ENCODE measurements at regions of chr19 and their contacts with region 1.

Region 1: GRCh38 chr19:11047866-11048265 is 41.4 kb upstream of the LDLR start:
- DNase-seq: no peak
- ATAC-seq: no peak
- H3K4me3 ChIP-seq: no peak overlapping the region
- H3K4me3 Mint-ChIP-seq: peak overlapping the region in 1 of 10 donors; percentile 34
- H3K27ac ChIP-seq: peak overlapping the region; percentile 68
- H3K27ac Mint-ChIP-seq: peak overlapping the region; percentile 55 to 98 (median 93)
- H3K4me1 ChIP-seq: peaks cover 33 to 44% of the 10 kb centered on the region in 2 donors
- H3K4me1 Mint-ChIP-seq: peaks cover 21 to 57% (median 51%) of the 10 kb centered on the region in 7 donors
- H3K27me3 ChIP-seq: no peaks in the 10 kb centered on the region
- H3K27me3 Mint-ChIP-seq: no peaks in the 10 kb centered on the region

Region 2: GRCh38 chr19:10653715-10654492 is 394.0 kb before region 1 on chr19 and contains the start of gene ILF3:
- CTCF ChIA-PET with region 1: no interaction called
- POLR2A ChIA-PET with region 1: no interaction called
- intact Hi-C with region 1: no loop called
- DNase-seq: peak; percentile 97 to 100 (median 100)
- ATAC-seq: peak; percentile 89
- H3K4me3 ChIP-seq: peak within 1 kb of the TSS; percentile 87
- H3K4me3 Mint-ChIP-seq: peak within 1 kb of the TSS; percentile 93 to 98 (median 95)
- H3K27ac ChIP-seq: peak within 1 kb of the TSS; percentile 100
- H3K27ac Mint-ChIP-seq: peak within 1 kb of the TSS; percentile 94 to 99 (median 98)
- H3K4me1 ChIP-seq: peaks cover 32 to 38% of the 10 kb centered on the region in 2 donors
- H3K4me1 Mint-ChIP-seq: peaks cover 17 to 61% (median 42%) of the 10 kb centered on the region in 7 donors
- H3K27me3 ChIP-seq: no peaks in the 10 kb centered on the region
- H3K27me3 Mint-ChIP-seq: peaks cover 0 to 3% (median 0%) of the 10 kb centered on the region in 5 donors
- total RNA-seq, gene ILF3: 346 to 515 (median 368) TPM

Region 3: GRCh38 chr19:10769533-10770491 is 278.1 kb before region 1 on chr19:
- CTCF ChIA-PET with region 1: no interaction called
- POLR2A ChIA-PET with region 1: no interaction called
- intact Hi-C with region 1: no loop called
- DNase-seq: peak in 6 of 9 donors; percentile 21 to 49 (median 38)
- ATAC-seq: no peak
- H3K4me3 ChIP-seq: no peak overlapping the region
- H3K4me3 Mint-ChIP-seq: no peak overlapping the region
- H3K27ac ChIP-seq: peak overlapping the region; percentile 29
- H3K27ac Mint-ChIP-seq: peak overlapping the region in 8 of 9 donors; percentile 20 to 79 (median 68)
- H3K4me1 ChIP-seq: peaks cover 0 to 4% of the 10 kb centered on the region in 2 donors
- H3K4me1 Mint-ChIP-seq: peaks cover 14 to 42% (median 32%) of the 10 kb centered on the region in 7 donors
- H3K27me3 ChIP-seq: no peaks in the 10 kb centered on the region
- H3K27me3 Mint-ChIP-seq: no peaks in the 10 kb centered on the region

Region 4: GRCh38 chr19:11090054-11090900 is 42.4 kb after region 1 on chr19:
- CTCF ChIA-PET with region 1: no interaction called
- POLR2A ChIA-PET with region 1: interaction called, 5 read pairs
- intact Hi-C with region 1: loop called (anchors 2 kb)
- DNase-seq: peak; percentile 89 to 97 (median 96)
- ATAC-seq: peak; percentile 90
- H3K4me3 ChIP-seq: peak overlapping the region; percentile 83
- H3K4me3 Mint-ChIP-seq: peak overlapping the region; percentile 85 to 94 (median 89)
- H3K27ac ChIP-seq: peak overlapping the region; percentile 91
- H3K27ac Mint-ChIP-seq: peak overlapping the region; percentile 88 to 99 (median 96)
- H3K4me1 ChIP-seq: peaks cover 24 to 41% of the 10 kb centered on the region in 2 donors
- H3K4me1 Mint-ChIP-seq: peaks cover 13 to 51% (median 44%) of the 10 kb centered on the region in 7 donors
- H3K27me3 ChIP-seq: no peaks in the 10 kb centered on the region
- H3K27me3 Mint-ChIP-seq: peaks cover 0 to 2% (median 0%) of the 10 kb centered on the region in 5 donors

Measured in naive thymus-derived CD4-positive, alpha-beta T cell (primary cell).